ENCODE measurements at regions of chr18 and their contacts with region 1.

Region 1: GRCh38 chr18:13159579-13159978 is 59.0 kb upstream of the LDLRAD4 start:
- DNase-seq: peak; percentile 58
- H3K4me3 ChIP-seq: no peak overlapping the region
- H3K27ac ChIP-seq: no peak overlapping the region
- H3K4me1 ChIP-seq: no peaks in the 10 kb centered on the region
- H3K27me3 ChIP-seq: peaks cover 0 to 6% of the 10 kb centered on the region in 2 experiments
- CTCF ChIP-seq: peak; percentile 67 to 77
- POLR2A ChIP-seq: no peak

Region 2: DNA sequence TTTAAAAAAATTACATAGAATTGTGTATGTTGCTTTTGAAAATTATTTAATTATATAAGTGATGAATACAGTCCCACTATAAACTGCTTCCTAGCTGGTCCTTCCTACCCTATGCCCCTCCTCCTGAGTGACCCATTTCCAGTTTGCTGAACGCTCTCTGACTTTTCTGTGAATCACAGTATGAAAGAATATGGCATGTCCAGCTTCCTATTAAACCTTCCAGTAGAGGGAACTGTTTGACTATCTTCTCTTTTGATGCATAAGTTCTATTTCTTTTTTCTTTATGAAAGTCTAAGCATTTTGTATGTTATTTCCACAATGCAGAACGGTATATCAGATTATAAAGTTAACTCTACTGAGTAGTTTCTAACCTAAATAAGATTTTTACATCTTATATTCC is 415.5 kb before region 1 on chr18:
- CTCF ChIA-PET with region 1: interaction called, 23 read pairs
- POLR2A ChIA-PET with region 1: no interaction called
- dilution Hi-C with region 1: no loop called
- intact Hi-C with region 1: no loop called
- DNase-seq: peak; percentile 79
- H3K4me3 ChIP-seq: no peak overlapping the region
- H3K27ac ChIP-seq: no peak overlapping the region
- H3K4me1 ChIP-seq: no peaks in the 10 kb centered on the region
- H3K27me3 ChIP-seq: peaks cover 0 to 2% of the 10 kb centered on the region in 2 experiments
- CTCF ChIP-seq: peak; percentile 37 to 40
- POLR2A ChIP-seq: no peak

Region 3: DNA sequence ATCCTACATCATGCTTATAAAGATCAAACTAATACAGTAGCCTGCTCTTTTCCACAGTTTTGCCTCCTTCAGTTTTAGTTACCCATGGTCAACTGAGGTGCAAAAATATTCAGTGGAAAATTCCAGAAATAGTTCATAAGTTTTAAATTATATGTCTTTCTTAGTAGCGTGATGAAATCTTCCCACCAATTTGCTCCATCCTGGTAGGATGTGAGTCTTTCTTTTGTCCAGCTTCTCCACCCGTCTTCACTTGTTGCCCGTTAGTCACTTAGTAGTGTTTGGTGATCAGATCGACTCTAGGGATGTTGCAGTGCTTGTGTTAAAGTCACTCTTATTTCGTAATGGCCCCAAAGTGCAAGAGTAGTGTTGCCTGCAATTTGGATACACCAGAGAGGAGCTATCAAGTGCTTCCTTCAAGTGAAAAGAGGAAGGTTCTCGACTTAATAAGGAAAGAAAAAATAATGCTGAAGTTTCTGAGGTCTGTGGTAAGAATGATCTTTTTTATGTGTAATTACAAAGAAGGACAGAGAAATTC is 111.5 kb before region 1 on chr18:
- CTCF ChIA-PET with region 1: no interaction called
- POLR2A ChIA-PET with region 1: no interaction called
- dilution Hi-C with region 1: no loop called
- intact Hi-C with region 1: no loop called
- DNase-seq: no peak
- H3K4me3 ChIP-seq: no peak overlapping the region
- H3K27ac ChIP-seq: no peak overlapping the region
- H3K4me1 ChIP-seq: peaks cover 19% of the 10 kb centered on the region
- H3K27me3 ChIP-seq: no peaks in the 10 kb centered on the region
- CTCF ChIP-seq: no peak
- POLR2A ChIP-seq: no peak

Region 4: GRCh38 chr18:13112982-13113381 is 46.6 kb before region 1 on chr18:
- CTCF ChIA-PET with region 1: interaction called, 27 read pairs
- POLR2A ChIA-PET with region 1: no interaction called
- dilution Hi-C with region 1: no loop called
- intact Hi-C with region 1: no loop called
- DNase-seq: peak; percentile 64
- H3K4me3 ChIP-seq: no peak overlapping the region
- H3K27ac ChIP-seq: no peak overlapping the region
- H3K4me1 ChIP-seq: no peaks in the 10 kb centered on the region
- H3K27me3 ChIP-seq: no peaks in the 10 kb centered on the region
- CTCF ChIP-seq: peak; percentile 22 to 54
- POLR2A ChIP-seq: no peak

Region 5: GRCh38 chr18:13139885-13140450 is 19.6 kb before region 1 on chr18:
- CTCF ChIA-PET with region 1: interaction called, 11 read pairs
- POLR2A ChIA-PET with region 1: no interaction called
- dilution Hi-C with region 1: no loop called
- intact Hi-C with region 1: no loop called
- DNase-seq: no peak
- H3K4me3 ChIP-seq: no peak overlapping the region
- H3K27ac ChIP-seq: no peak overlapping the region
- H3K4me1 ChIP-seq: peaks cover 12% of the 10 kb centered on the region
- H3K27me3 ChIP-seq: peaks cover 8 to 25% of the 10 kb centered on the region in 2 experiments
- CTCF ChIP-seq: no peak
- POLR2A ChIP-seq: no peak

Region 6: GRCh38 chr18:13191031-13191430 is 31.5 kb after region 1 on chr18:
- CTCF ChIA-PET with region 1: interaction called, 17 read pairs
- POLR2A ChIA-PET with region 1: no interaction called
- dilution Hi-C with region 1: no loop called
- intact Hi-C with region 1: no loop called
- DNase-seq: no peak
- H3K4me3 ChIP-seq: no peak overlapping the region
- H3K27ac ChIP-seq: no peak overlapping the region
- H3K4me1 ChIP-seq: no peaks in the 10 kb centered on the region
- H3K27me3 ChIP-seq: peaks cover 0 to 2% of the 10 kb centered on the region in 2 experiments
- CTCF ChIP-seq: no peak
- POLR2A ChIP-seq: no peak

Region 7: GRCh38 chr18:13246121-13246520 is 86.5 kb after region 1 on chr18:
- CTCF ChIA-PET with region 1: no interaction called
- POLR2A ChIA-PET with region 1: no interaction called
- dilution Hi-C with region 1: no loop called
- intact Hi-C with region 1: no loop called
- DNase-seq: no peak
- H3K4me3 ChIP-seq: no peak overlapping the region
- H3K27ac ChIP-seq: no peak overlapping the region
- H3K4me1 ChIP-seq: no peaks in the 10 kb centered on the region
- H3K27me3 ChIP-seq: peaks cover 0 to 4% of the 10 kb centered on the region in 2 experiments
- CTCF ChIP-seq: no peak
- POLR2A ChIP-seq: no peak

Region 8: DNA sequence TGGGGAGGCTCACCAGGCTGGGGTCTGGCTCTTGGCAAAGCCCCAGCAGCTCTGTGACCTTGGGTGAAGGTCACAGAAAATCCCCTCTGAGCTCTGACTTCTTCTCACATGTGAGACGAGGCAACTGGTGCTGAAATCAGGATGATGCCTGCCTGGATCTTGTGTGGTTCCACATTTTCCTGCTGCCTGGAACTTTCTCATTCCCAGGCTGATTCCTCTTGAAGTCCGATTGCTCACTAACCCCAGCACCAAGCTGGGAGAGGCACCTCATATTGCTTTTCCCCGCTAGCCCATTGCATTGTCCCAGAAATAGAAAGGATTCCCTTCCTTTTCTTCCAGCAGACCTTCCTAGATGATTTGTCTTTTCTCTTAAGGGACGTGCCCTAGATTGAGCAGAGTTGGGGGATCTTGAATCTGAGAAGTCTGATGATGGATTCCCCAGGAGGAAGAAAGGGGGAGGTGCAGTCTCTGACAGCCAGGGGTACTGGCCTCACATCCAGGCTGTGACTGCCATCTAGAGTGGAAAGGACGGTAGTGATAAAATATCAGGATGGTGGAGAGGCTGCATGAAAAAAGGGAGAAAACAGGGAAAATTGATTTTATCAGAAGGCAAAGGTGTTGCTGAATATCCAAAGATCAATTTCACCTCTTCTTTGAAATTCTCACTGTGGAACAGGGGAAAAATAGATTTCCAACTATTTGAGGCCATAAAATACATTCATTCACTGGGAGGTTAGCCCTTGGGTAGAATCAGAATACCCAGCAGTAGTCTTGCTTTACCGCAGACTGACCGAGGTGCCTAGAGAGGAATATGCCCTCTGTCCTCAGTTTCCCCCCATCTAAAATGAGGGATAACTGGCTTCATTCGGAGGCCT is 470.5 kb after region 1 on chr18:
- CTCF ChIA-PET with region 1: interaction called, 13 read pairs
- POLR2A ChIA-PET with region 1: no interaction called
- dilution Hi-C with region 1: no loop called
- intact Hi-C with region 1: loop called (anchors 1 kb)
- DNase-seq: peak; percentile 67
- H3K4me3 ChIP-seq: no peak overlapping the region
- H3K27ac ChIP-seq: no peak overlapping the region
- H3K4me1 ChIP-seq: no peaks in the 10 kb centered on the region
- H3K27me3 ChIP-seq: no peaks in the 10 kb centered on the region
- CTCF ChIP-seq: peak; percentile 63 to 68
- POLR2A ChIP-seq: no peak

Measured in endothelial cell of umbilical vein (primary cell).